Sigmoid colon (tissue), 7 donors: ENCODE measurements at regions of chr11 and their contacts with region 1.

Region 1: DNA sequence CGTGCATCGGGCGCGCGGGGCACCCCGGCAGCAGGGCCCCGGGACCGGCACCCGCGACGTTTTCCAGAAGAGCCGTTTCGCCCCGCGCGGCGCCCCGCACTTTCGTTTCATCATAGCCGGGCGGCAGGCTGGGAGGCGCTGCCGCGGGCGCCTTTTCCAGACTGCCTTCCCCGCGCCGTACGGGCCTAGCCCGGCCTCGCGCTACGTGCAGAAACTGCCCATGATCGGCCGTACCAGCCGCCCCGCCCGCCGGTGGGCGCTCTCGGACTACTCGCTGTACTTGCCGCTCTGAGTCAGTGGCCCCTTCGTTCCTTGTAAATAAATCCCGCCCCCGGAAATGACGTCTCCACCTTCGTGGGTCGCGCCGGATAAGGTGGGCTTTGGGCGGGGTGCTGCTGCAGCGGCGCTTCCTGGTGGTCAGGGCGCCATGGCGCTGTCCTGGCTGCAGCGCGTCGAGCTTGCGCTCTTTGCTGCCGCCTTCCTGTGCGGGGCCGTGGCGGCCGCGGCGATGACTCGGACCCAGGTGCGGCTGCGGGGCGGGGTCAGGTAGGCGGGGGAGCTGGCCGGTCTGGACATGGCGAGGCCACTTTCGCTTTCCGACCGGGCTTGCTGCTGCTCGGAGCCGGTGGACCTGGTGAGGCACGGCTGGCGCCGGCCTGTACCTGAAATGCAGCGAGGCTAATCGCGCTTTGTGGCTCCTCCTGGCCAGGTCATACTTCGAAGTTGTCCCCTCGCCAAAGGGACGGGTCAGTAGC is at the start of gene TMEM179B:
- DNase-seq: peak; percentile 99
- H3K4me3 ChIP-seq: peak within 1 kb of the TSS; percentile 85 to 99 (median 92)
- H3K27ac ChIP-seq: peak within 1 kb of the TSS; percentile 94 to 100 (median 97)
- H3K4me1 ChIP-seq: peaks cover 0 to 47% (median 41%) of the 10 kb centered on the region in 4 donors
- H3K27me3 ChIP-seq: no peaks in the 10 kb centered on the region
- CTCF ChIP-seq: peak in 1 of 4 experiments; percentile 16
- EP300 ChIP-seq: peak in 2 of 4 donors; percentile 12 to 62
- POLR2A ChIP-seq: peak; percentile 96 to 98
- total RNA-seq, gene TMEM179B: 38.2 to 49.6 (median 43.0) TPM

Region 2: DNA sequence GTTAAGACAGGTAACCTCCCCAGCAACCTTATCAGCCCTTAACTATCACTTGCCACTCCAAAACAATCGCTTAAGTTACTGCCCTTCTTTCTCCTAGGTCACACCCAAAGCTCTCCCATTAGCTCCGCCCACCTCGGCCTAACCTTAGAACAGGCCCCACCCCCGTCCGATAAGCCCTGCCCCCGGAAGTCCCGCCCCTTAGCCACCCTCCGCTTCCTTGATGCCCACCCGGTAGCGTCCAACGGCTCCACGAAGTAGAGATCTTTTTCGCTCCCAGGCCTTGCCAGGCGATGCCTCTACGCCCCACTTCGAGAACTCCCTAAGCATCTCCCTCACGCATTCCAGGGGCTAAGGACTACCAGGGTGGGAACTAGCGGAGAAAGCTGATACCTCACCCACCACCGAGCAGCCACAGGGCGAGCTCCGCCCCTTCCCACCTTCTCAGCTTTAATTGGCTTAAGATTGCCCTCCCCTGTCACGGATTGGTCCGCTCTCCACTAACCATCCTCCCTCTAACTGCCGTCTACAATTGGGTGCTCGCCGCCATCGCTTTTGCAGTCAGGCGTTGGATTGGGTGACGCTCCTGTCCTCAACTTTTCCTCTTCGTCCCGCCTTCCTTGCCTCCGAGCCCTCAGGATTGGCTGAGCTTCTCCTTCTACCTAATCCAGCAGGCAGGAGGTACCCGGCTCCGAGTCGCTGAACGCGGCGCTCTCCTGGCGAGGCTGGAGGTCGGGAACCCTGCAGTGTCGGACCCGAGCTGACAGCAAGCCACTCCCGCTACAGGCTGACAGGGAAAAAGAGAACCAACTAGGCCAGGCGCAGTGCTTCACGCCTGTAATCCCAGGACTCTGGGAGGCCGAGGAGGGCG is 33.2 kb before region 1 on chr11 and contains the start of gene ZBTB3:
- intact Hi-C with region 1: no loop called
- DNase-seq: peak; percentile 99
- H3K4me3 ChIP-seq: peak within 1 kb of the TSS; percentile 50 to 70 (median 66)
- H3K27ac ChIP-seq: peak within 1 kb of the TSS; percentile 90 to 96 (median 94)
- H3K4me1 ChIP-seq: peaks cover 0 to 38% (median 18%) of the 10 kb centered on the region in 4 donors
- H3K27me3 ChIP-seq: no peaks in the 10 kb centered on the region
- CTCF ChIP-seq: peak in 1 of 4 experiments; percentile 9
- EP300 ChIP-seq: no peak
- POLR2A ChIP-seq: peak; percentile 76 to 87
- total RNA-seq, gene ZBTB3: 6.6 to 12.1 (median 7.7) TPM

Region 3: DNA sequence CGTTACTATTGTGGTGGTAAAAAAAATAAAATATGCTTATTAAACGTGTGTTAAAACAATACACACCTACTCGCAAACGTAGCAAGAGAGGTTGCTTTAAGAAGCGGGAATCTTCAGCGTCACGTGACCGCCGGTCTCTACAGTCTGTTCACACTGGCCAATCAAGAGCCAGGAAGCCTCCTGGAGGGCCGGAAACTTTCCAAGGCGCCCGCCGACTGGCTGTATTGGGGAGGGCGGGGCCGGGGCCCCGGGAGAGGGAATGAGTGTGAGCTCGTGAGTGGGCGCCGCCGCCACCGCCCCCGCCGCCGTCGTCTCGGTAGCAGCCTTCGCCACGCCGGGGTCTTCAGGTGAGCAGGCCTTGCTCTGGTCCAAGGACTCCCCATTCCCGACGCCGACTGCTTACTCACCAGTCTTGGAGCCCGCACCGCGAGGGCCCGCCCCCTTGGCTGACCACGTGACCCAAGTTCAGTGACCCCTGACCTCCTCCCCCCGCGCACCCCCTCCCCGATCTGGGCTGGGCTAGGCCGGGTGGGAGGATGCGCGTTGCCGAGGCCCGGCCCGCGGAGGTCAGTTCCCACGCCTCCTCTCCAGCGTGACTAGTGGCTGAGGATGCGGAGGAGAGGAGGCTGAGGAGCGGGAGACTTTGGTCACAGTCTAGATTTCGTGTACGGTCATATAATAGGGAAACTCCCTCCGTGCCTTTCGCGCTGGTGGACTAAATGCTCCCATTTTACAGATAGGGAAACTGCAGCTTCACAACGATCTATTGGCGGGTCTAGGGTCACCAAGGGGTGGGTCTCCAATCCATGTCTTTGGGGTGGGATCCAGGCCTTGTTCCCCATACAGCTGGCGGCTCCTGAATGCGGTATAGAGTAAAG is 15.8 kb before region 1 on chr11 and contains the start of gene TAF6L:
- intact Hi-C with region 1: loop called (anchors 1 kb)
- DNase-seq: peak; percentile 100
- H3K4me3 ChIP-seq: peak within 1 kb of the TSS; percentile 62 to 73 (median 68)
- H3K27ac ChIP-seq: peak within 1 kb of the TSS; percentile 91 to 96 (median 94)
- H3K4me1 ChIP-seq: peaks cover 0 to 28% (median 22%) of the 10 kb centered on the region in 4 donors
- H3K27me3 ChIP-seq: no peaks in the 10 kb centered on the region
- CTCF ChIP-seq: no peak
- EP300 ChIP-seq: peak in 1 of 4 donors; percentile 10
- POLR2A ChIP-seq: peak; percentile 31 to 42
- total RNA-seq, gene TAF6L: 13.2 to 20.1 (median 16.7) TPM

Region 4: GRCh38 chr11:62831520-62832335 is 44.5 kb after region 1 on chr11 and contains the start of gene STX5:
- intact Hi-C with region 1: loop called (anchors 5 kb)
- DNase-seq: peak; percentile 100
- H3K4me3 ChIP-seq: peak within 1 kb of the TSS; percentile 77 to 90 (median 84)
- H3K27ac ChIP-seq: peak within 1 kb of the TSS; percentile 95 to 99 (median 96)
- H3K4me1 ChIP-seq: peaks cover 0 to 51% (median 45%) of the 10 kb centered on the region in 4 donors
- H3K27me3 ChIP-seq: no peaks in the 10 kb centered on the region
- CTCF ChIP-seq: no peak
- EP300 ChIP-seq: no peak
- POLR2A ChIP-seq: peak; percentile 87 to 90
- total RNA-seq, gene STX5: 27.1 to 37.8 (median 31.2) TPM

Region 5: DNA sequence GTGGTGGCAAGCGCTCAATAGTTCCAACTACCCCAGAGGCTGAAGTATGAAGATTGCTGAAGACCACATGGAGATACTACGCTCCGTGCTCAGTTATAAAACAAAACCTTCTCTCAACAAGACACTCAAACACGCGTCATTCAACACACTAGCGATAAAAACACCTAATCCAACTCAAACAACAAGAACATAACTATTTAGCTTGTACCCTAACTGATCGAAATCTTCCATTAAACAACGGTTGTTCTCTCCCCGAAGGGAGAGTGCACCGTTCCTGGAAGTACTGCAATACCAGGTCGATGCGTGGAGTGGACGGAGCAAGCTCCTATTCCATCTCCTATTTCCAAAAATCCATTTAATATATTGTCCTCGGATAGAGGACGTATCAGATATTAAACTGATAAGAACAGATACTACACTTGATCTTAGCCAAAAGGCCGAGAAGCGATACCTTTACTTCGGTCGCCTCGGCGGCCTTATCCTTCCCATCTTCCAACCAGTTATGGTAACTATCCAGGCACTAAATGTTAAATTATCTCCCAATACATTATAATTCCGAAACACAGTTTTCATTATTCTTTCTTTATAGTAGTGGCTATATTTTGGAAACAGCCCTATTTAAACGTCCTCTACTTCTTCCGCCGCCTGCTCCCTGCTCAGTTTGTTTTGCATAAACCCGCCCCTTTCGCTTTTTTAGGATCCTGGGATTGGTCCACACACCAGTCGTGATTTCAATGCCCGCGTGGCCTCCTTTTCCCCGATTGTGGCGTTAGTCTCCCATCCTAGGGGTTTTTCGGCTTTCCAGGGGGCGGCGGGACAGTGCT is 54.4 kb after region 1 on chr11:
- intact Hi-C with region 1: loop called (anchors 5 kb)
- DNase-seq: peak; percentile 95
- H3K4me3 ChIP-seq: peak overlapping the region; percentile 30 to 92 (median 84)
- H3K27ac ChIP-seq: peak overlapping the region; percentile 96 to 98 (median 98)
- H3K4me1 ChIP-seq: peaks cover 0 to 38% (median 27%) of the 10 kb centered on the region in 4 donors
- H3K27me3 ChIP-seq: no peaks in the 10 kb centered on the region
- CTCF ChIP-seq: no peak
- EP300 ChIP-seq: peak in 2 of 4 donors; percentile 3 to 75
- POLR2A ChIP-seq: peak; percentile 100

Region 6: GRCh38 chr11:62880803-62881578 is 93.8 kb after region 1 on chr11 and contains the start of gene SLC3A2:
- intact Hi-C with region 1: loop called (anchors 1 kb)
- DNase-seq: peak; percentile 96
- H3K4me3 ChIP-seq: peak within 1 kb of the TSS; percentile 72 to 99 (median 88)
- H3K27ac ChIP-seq: peak within 1 kb of the TSS; percentile 97 to 100 (median 98)
- H3K4me1 ChIP-seq: peaks cover 0 to 55% (median 49%) of the 10 kb centered on the region in 4 donors
- H3K27me3 ChIP-seq: no peaks in the 10 kb centered on the region
- CTCF ChIP-seq: peak; percentile 45 to 64 (median 58)
- EP300 ChIP-seq: peak in 1 of 4 donors; percentile 24
- POLR2A ChIP-seq: peak; percentile 99
- total RNA-seq, gene SLC3A2: 44.0 to 70.4 (median 50.4) TPM

Region 7: DNA sequence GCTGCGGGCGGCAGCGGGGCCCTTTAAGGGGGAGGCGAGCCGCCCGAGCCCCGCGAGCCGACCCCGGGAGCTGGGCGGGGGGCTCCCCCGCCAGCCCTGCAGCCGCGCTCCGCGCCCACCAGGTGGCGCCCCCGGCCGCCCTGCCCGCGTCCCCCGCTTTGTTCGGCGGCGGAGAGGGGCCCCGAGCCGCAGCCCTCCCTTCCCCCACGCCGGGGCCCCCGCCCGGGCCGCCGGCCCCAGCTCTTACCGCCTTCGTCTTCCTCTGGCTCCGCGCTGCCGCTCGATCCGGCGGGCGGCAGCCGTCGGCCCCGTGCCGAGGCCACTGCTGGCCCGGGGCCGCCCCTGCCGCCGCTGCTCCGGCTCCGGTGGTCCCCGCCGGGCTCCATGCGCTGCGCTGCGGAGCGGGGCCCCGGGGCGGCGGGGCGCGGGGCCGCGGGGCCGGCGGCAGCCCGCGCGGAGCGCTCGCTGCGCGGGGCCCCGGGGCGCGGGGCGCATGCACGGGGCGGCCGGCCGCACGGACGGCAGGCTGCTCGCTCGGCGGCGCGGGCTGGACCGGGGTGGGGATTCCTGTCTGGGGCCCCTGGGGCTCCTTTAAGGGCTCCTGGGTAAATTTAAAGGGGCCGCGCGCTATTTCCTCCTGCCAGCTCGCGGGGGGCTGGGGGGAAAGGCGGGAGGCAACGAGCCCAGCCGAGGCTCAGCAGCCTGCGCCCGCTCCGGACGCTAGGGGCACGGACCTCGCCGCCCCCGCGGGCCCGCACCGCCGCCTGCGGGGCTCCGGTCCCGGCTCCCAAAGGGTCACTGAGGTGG is 981.3 kb after region 1 on chr11 and contains the start of gene ZFTA:
- intact Hi-C with region 1: loop called (anchors 10 kb)
- DNase-seq: peak; percentile 87
- H3K4me3 ChIP-seq: peak within 1 kb of the TSS; percentile 72 to 95 (median 90)
- H3K27ac ChIP-seq: peak within 1 kb of the TSS; percentile 86 to 94 (median 91)
- H3K4me1 ChIP-seq: peaks cover 0 to 54% (median 48%) of the 10 kb centered on the region in 4 donors
- H3K27me3 ChIP-seq: no peaks in the 10 kb centered on the region
- CTCF ChIP-seq: peak in 1 of 4 experiments; percentile 67
- EP300 ChIP-seq: no peak
- POLR2A ChIP-seq: no peak
- total RNA-seq, gene ZFTA: 11.1 to 20.4 (median 13.6) TPM